ENCODE measurements at regions of chr3 and their contacts with region 1.

Region 1: DNA sequence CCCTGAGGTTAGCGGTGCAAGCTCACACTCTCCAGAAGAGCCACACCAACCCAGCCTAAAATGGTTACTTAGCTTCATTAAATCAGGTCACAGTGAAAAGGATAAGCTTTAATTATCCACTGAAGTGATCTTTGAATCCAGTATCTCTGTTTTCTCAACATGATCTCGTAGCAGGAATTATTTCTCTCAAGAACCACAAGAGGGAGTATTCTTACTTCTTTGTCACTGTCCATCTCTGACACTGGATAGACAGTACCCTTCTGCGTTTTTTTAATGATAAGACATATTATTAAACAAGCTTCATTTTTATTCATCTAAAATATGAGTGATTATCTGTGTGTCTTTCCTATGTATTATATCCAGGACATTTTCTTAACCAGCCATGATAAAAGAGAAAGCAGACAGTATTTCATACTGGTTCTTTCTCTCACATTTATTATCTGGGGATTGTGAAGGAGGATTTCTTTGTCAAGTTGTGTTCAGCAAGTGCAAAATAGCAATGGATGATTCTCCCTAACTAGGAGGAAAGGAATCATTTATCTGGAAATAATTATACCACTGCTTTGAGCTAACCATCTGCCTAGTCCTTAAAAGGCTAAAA is 105.4 kb upstream of the CCDC54 start:
- DNase-seq: no peak
- ATAC-seq: peak; percentile 51
- H3K4me3 Mint-ChIP-seq: no peak overlapping the region
- H3K27ac Mint-ChIP-seq: no peak overlapping the region
- H3K4me1 Mint-ChIP-seq: no peaks in the 10 kb centered on the region
- H3K27me3 Mint-ChIP-seq: peaks cover 26% of the 10 kb centered on the region

Region 2: DNA sequence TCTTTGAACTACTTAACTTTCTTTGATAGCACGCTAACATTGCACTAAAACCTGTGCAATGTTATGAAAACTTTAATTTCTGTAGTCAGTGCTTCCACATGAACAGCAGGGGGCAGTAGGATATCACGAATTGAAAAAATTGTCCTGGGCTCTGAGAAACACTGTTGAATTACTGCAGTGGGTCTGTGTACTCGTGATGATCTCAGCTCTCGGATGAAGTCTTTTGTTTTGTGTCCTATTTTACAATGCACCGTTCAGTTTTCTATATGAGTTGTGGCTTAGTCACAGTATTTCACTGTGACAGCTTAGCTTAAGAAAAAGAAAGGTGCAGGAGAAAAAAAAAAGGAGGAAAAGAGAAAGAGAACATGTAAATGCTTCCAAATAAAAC is 36.0 kb before region 1 on chr3:
- CTCF ChIA-PET with region 1: interaction called, 22 read pairs
- POLR2A ChIA-PET with region 1: no interaction called
- DNase-seq: peak; percentile 70
- ATAC-seq: peak; percentile 51
- H3K4me3 Mint-ChIP-seq: peak overlapping the region; percentile 65
- H3K27ac Mint-ChIP-seq: no peak overlapping the region
- H3K4me1 Mint-ChIP-seq: peaks cover 18% of the 10 kb centered on the region
- H3K27me3 Mint-ChIP-seq: peaks cover 7% of the 10 kb centered on the region

Region 3: GRCh38 chr3:107284612-107285011 is 12.7 kb after region 1 on chr3:
- CTCF ChIA-PET with region 1: interaction called, 15 read pairs
- POLR2A ChIA-PET with region 1: no interaction called
- DNase-seq: no peak
- ATAC-seq: no peak
- H3K4me3 Mint-ChIP-seq: no peak overlapping the region
- H3K27ac Mint-ChIP-seq: no peak overlapping the region
- H3K4me1 Mint-ChIP-seq: no peaks in the 10 kb centered on the region
- H3K27me3 Mint-ChIP-seq: peaks cover 24% of the 10 kb centered on the region

Region 4: DNA sequence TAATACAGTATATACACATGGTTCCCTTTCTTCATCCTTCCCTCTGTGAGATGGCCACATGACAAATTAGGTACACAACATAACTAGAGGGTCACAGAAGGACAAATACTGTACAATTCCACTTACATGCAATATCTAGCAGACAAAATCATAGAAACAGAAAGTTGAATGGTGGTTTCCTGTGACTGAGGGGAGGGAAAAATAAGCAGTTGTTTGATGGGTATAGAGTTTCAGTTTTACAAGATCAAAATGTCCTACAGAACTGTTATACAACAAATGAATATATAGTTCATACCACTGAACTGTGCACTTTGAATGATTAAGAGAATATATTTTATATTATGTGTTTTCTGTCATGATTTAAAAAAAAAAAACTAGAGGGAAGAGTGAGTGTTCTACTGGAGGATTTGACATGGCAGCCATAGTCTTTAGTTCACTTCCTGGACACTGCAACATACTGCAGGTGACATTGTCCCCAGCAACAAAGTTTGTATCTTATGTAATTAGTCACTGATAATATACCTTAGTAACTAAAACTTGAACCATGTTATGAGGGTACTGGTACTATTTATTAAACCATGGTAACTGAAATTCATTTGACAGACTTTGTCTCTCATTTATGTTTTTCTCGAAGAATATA is 142.6 kb after region 1 on chr3:
- CTCF ChIA-PET with region 1: interaction called, 12 read pairs
- POLR2A ChIA-PET with region 1: no interaction called
- DNase-seq: no peak
- ATAC-seq: peak; percentile 86
- H3K4me3 Mint-ChIP-seq: no peak overlapping the region
- H3K27ac Mint-ChIP-seq: peak overlapping the region; percentile 68
- H3K4me1 Mint-ChIP-seq: peaks cover 12% of the 10 kb centered on the region
- H3K27me3 Mint-ChIP-seq: peaks cover 2% of the 10 kb centered on the region

Region 5: DNA sequence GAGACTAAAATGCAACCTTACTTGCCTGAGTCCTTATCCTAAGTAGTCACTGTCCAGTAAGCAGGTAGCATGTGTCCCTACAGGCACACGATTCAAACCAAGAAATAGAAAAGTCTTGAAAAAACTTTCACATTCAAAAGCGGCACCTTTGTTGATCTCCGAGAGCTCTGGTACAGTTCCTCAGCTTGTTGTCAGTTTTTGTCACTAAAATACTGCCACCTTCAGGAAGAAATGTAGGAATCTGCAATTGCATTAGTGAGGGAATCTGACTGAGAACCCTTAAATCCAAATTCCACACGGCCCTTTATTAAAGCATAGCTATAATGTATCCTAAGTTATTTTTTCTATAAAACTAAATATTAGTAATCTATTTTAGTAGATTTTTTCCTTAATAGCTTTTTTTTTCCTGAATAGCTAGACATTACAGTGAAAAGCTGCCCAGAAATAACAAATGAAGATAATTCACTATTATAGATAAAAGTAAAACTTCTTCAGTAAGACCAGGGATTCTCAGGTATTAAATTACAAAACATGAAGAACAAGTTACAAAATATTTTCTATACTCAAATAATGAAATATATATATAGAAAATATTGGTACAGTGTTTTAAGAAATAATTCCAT is 149.4 kb after region 1 on chr3:
- CTCF ChIA-PET with region 1: interaction called, 62 read pairs
- POLR2A ChIA-PET with region 1: no interaction called
- DNase-seq: peak; percentile 36
- ATAC-seq: peak; percentile 83
- H3K4me3 Mint-ChIP-seq: no peak overlapping the region
- H3K27ac Mint-ChIP-seq: no peak overlapping the region
- H3K4me1 Mint-ChIP-seq: peaks cover 3% of the 10 kb centered on the region
- H3K27me3 Mint-ChIP-seq: peaks cover 26% of the 10 kb centered on the region

Region 6: DNA sequence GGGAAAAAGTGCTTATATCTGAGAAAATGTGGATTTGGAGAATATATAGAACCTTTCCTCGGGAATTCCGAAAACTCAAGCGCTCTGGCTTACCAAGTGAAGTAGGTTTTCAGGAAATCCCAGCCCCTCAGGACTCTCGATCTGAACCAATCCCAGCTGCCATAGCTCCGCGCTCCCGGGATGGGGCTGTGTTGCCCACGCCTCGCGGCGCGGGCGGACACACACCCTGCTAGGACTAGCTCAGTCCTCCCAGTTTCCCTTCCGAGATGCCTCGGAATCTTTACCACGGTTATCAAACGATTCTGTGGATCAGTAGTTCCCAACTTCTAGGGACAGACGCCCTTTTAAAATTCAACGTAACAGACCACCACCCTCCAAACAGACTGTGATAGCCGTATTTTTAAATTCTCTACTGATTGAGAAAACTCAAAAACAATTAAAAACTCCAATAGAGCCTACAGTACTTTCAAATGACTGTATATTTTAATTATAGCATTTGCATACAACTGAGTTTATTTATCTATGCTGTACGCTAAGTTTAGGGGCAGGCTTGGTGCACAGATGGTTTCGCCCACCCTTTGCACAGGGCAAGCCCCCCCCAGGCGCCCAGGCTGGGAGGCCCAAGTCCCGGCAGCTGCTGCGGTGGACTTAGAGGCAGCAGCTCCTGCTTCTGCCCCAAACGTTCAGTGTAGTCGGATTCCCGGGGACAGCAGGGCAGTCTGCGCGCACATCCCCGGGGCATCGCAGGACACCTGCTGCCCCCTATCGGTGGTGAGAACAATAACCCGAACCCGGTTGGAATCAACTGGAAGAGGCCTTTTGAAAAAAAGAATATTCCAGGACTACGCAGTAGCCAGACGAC is 157.7 kb after region 1 on chr3:
- CTCF ChIA-PET with region 1: interaction called, 55 read pairs
- POLR2A ChIA-PET with region 1: no interaction called
- DNase-seq: peak; percentile 62
- ATAC-seq: peak; percentile 58
- H3K4me3 Mint-ChIP-seq: peak overlapping the region; percentile 78
- H3K27ac Mint-ChIP-seq: no peak overlapping the region
- H3K4me1 Mint-ChIP-seq: peaks cover 21% of the 10 kb centered on the region
- H3K27me3 Mint-ChIP-seq: peaks cover 38% of the 10 kb centered on the region

Measured in activated CD8-positive, alpha-beta T cell treated with anti-CD3 and anti-CD28 coated beads, Interleukin-2, amount 10 ng/mL, durations not matched to agents 7 days and 5 days (primary cell).